IMR-90 (cell line): ENCODE measurements at regions of chr3 and their contacts with region 1.

Region 1: GRCh38 chr3:107927361-107928083 is 163.3 kb downstream of the CD47 start:
- DNase-seq: peak; percentile 67
- ATAC-seq: peak; percentile 100
- H3K4me3 ChIP-seq: peak overlapping the region; percentile 55
- H3K27ac ChIP-seq: no peak overlapping the region
- H3K4me1 ChIP-seq: no peaks in the 10 kb centered on the region
- H3K27me3 ChIP-seq: peaks cover 8% of the 10 kb centered on the region
- CTCF ChIP-seq: peak; percentile 80
- POLR2A ChIP-seq: no peak
- RAD21 ChIP-seq: peak; percentile 64

Region 2: GRCh38 chr3:107574650-107575049 is 352.9 kb before region 1 on chr3:
- CTCF ChIA-PET with region 1: interaction called, 3 read pairs
- POLR2A ChIA-PET with region 1: no interaction called
- dilution Hi-C with region 1: no loop called
- in situ Hi-C with region 1: no loop called
- intact Hi-C with region 1: loop called (anchors 5 kb)
- DNase-seq: peak; percentile 51
- ATAC-seq: peak; percentile 82
- H3K4me3 ChIP-seq: no peak overlapping the region
- H3K27ac ChIP-seq: no peak overlapping the region
- H3K4me1 ChIP-seq: no peaks in the 10 kb centered on the region
- H3K27me3 ChIP-seq: no peaks in the 10 kb centered on the region
- CTCF ChIP-seq: peak; percentile 61
- POLR2A ChIP-seq: no peak
- RAD21 ChIP-seq: peak; percentile 68

Region 3: GRCh38 chr3:107660306-107660976 is 267.1 kb before region 1 on chr3:
- CTCF ChIA-PET with region 1: no interaction called
- POLR2A ChIA-PET with region 1: no interaction called
- dilution Hi-C with region 1: no loop called
- in situ Hi-C with region 1: no loop called
- intact Hi-C with region 1: loop called (anchors 1 kb)
- DNase-seq: peak; percentile 77
- ATAC-seq: peak; percentile 41
- H3K4me3 ChIP-seq: no peak overlapping the region
- H3K27ac ChIP-seq: peak overlapping the region; percentile 31; the same call in 1 of the 2 replicates
- H3K4me1 ChIP-seq: peaks cover 5% of the 10 kb centered on the region
- H3K27me3 ChIP-seq: no peaks in the 10 kb centered on the region
- CTCF ChIP-seq: peak; percentile 75
- POLR2A ChIP-seq: no peak
- RAD21 ChIP-seq: peak; percentile 59

Region 4: GRCh38 chr3:107676469-107677309 is 250.8 kb before region 1 on chr3:
- CTCF ChIA-PET with region 1: interaction called, 3 read pairs
- POLR2A ChIA-PET with region 1: no interaction called
- dilution Hi-C with region 1: no loop called
- in situ Hi-C with region 1: no loop called
- intact Hi-C with region 1: loop called (anchors 2 kb)
- DNase-seq: peak; percentile 43
- ATAC-seq: peak; percentile 54; the same call in 1 of the 2 replicates
- H3K4me3 ChIP-seq: no peak overlapping the region
- H3K27ac ChIP-seq: no peak overlapping the region
- H3K4me1 ChIP-seq: 0 out of 2 replicates have a peak, but pooled peaks cover 3% of the 10 kb centered on the region
- H3K27me3 ChIP-seq: no peaks in the 10 kb centered on the region
- CTCF ChIP-seq: peak; percentile 57
- POLR2A ChIP-seq: no peak
- RAD21 ChIP-seq: peak; percentile 50

Region 5: DNA sequence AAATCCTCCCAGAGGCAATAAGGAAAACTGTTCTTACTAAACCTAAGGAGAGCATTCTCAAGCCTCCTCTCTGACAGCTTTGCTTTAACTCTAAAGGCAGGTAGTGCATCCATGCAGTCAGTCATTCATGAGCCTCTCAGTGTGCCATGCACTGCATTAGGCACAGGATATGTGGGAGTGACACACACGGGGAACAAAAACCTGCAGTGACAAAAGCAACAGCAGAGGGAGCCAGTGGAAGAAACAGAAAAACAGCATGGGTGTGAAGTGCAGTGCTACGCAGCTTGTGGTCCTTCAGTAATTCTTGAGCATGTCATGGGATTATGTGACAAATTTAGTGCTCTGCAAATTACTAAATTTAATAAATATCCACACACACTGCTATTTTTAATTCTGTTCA is 174.0 kb before region 1 on chr3:
- CTCF ChIA-PET with region 1: no interaction called
- POLR2A ChIA-PET with region 1: no interaction called
- dilution Hi-C with region 1: no loop called
- in situ Hi-C with region 1: loop called (anchors 10 kb)
- intact Hi-C with region 1: loop called (anchors 2 kb)
- DNase-seq: peak; percentile 30
- ATAC-seq: peak; percentile 61; the same call in 1 of the 2 replicates
- H3K4me3 ChIP-seq: no peak overlapping the region
- H3K27ac ChIP-seq: no peak overlapping the region
- H3K4me1 ChIP-seq: no peaks in the 10 kb centered on the region; the same call in 1 of the 2 replicates
- H3K27me3 ChIP-seq: no peaks in the 10 kb centered on the region
- CTCF ChIP-seq: peak; percentile 44
- POLR2A ChIP-seq: no peak
- RAD21 ChIP-seq: peak; percentile 35; the same call in 1 of the 2 replicates